Gastrocnemius medialis (tissue), 4 donors: ENCODE measurements at regions of chr18 and their contacts with region 1.

Region 1: DNA sequence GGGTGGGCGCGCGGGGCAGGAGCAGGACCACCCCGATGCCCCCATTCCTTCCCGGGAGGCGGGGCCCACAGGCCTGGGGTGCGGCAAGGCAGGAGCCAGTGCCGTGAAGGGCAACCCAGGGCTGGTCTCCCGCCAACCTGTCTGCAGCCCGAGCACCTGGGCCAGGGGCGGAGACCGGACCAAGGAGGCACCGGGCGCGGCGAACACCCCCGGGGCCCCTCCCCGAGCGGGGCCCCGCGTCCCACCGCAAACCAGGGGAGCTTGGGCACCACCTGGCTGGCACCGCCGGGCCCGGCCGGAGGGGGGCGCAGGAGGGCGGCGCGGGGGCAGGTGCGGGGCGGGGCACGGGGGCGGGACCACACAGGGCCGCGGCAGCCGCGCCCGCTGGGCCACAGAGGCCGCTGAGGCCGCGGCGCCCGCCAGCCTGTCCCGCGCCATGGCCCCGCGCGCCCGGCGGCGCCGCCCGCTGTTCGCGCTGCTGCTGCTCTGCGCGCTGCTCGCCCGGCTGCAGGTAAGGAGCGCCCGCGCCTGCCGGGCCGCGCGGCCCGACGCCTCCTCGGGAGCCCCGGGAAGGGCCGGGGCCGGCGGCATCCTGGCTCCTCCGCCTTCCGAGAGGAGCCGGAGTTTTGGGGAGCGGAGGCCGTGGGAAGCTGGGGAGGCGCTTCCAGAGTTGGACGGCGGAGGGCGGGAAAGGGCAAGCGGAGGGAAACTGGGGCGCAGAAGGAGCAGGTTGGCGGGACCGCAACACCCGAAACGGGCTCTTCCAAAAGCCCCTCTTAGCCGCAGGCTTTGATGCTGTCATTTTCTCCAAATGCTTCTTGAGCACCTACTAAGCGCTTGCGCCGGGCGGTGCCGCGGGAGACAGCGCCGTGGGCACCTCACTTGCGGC is at the start of gene TNFRSF11A:
- DNase-seq: no peak
- ATAC-seq: peak; percentile 38 to 64
- H3K4me3 ChIP-seq: peak within 1 kb of the TSS; percentile 52 to 58 (median 54)
- H3K27ac ChIP-seq: no peak within 1 kb of the TSS
- H3K4me1 ChIP-seq: peaks cover 15 to 24% of the 10 kb centered on the region in 2 donors
- H3K27me3 ChIP-seq: peaks cover 63 to 80% (median 69%) of the 10 kb centered on the region in 3 donors
- CTCF ChIP-seq: peak in 4 of 5 experiments; percentile 20 to 30 (median 24)
- POLR2A ChIP-seq: no peak
- total RNA-seq, gene TNFRSF11A: 1.4 to 3.2 (median 1.8) TPM in 3 of 4 donors, not detected in the other

Region 2: GRCh38 chr18:62584241-62585120 is 259.3 kb after region 1 on chr18:
- in situ Hi-C with region 1: no loop called
- intact Hi-C with region 1: loop called (anchors 2 kb)
- DNase-seq: peak; percentile 78 to 83
- ATAC-seq: peak; percentile 90 to 95
- H3K4me3 ChIP-seq: peak overlapping the region in 2 of 4 donors; percentile 30 to 35
- H3K27ac ChIP-seq: peak overlapping the region; percentile 63 to 70 (median 64)
- H3K4me1 ChIP-seq: peaks cover 11 to 13% of the 10 kb centered on the region in 2 donors
- H3K27me3 ChIP-seq: no peaks in the 10 kb centered on the region
- CTCF ChIP-seq: peak; percentile 95 to 99 (median 97)
- POLR2A ChIP-seq: no peak